HEK293T (cell line): ENCODE measurements at regions of chr4 and their contacts with region 1.

Region 1: DNA sequence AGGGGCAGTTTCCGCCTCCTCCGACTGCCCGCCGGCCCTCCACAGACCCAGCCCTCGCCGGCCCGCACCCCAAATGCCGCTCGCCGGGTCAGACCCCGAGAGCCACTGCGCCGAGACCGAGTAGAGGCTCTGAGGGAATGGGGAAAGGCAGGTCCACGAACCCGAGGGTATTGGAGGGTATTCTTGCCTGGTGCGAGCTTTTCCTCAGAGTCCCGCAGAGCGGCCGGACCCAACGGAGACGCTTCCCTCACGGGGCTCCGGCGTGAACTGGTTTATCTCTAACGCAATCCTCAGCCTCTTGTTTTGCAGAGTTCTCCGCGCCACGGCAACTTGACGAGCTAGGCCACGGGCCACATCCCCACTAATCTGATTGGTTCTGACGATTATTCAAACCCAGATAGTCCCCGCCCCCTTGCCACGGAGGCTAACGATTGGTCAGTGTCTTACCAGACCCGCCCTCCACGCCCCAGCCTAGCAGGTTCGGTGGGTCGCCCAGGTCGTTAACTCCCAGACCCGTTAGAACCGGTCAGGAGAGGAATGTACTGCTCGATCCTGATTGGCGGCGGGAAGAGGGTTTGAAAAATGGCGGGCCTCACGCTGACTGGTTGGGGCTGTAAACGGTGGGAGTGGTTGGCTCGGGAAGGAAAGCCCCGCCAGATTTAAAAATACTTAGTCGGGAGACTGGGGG is at the start of gene HMGB2:
- DNase-seq: peak; percentile 94

Region 2: DNA sequence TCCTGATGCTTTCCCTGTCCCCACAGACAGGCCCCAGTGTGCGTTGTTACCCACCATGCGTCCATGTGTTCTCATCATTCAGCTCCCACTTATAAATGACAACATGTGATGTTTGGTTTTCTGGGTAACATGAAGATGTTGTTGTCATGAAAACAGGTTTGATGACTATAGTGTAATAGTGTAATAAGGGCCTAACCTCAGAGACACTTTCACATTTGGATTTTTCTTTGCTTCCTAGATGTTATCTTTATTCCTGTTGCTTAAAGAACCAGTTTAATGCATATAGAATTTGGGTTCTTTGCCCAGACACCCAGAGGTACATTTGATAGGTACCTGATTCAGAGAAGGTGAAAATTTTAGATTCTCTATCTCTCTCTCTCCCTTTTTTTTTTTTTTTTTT is 137.5 kb before region 1 on chr4:
- CTCF ChIA-PET with region 1: no interaction called
- POLR2A ChIA-PET with region 1: no interaction called
- DNase-seq: no peak

Region 3: DNA sequence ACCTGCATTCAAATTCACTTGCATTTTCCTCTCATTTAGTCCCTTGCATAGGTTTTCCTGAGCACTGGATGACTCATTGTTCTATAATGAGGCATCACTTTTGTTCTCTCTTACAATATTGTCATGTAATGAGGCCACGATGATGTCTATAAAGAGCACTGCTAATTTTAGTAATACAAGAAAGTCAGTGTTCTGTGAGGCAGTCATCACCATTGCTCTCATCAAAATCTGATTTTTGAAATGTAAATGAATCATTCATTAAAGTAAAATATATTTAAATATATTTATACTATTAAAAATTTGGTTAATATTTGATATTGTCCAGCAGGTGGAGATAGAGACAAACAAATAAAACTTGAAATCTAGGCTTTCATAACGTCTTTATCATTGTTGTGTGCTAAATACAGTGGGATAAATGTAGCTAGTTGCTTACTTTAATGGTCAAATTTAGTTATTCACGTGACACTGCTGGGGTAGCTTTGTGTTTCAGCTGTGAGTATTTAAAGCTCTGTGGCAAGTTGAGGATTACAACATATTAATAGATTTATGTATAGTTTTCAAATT is 15.5 kb before region 1 on chr4:
- CTCF ChIA-PET with region 1: no interaction called
- POLR2A ChIA-PET with region 1: interaction called, 38 read pairs
- DNase-seq: no peak

Region 4: GRCh38 chr4:173360587-173361221 is 26.5 kb after region 1 on chr4:
- CTCF ChIA-PET with region 1: interaction called, 4 read pairs
- POLR2A ChIA-PET with region 1: interaction called, 317 read pairs
- DNase-seq: peak; percentile 14

Region 5: DNA sequence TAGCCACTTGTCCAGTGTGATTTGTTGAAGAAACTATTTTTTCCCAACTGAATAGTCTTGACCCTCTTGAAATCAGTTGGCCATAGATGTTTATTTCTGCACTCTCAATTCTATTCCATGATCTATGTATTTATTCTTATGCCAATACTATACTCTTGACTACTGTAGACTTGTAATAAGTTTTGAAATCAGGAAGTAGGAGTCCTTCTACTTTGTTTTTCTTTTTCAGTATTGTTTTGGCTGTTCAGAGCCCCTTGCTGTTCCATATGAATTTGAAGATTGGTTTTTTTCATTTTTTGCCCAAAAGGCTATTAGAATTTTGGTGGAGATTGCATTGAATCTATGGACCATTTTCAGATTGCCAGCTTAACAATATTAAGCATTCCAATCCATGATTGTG is 46.8 kb after region 1 on chr4:
- CTCF ChIA-PET with region 1: no interaction called
- POLR2A ChIA-PET with region 1: interaction called, 317 read pairs
- DNase-seq: no peak

Region 6: DNA sequence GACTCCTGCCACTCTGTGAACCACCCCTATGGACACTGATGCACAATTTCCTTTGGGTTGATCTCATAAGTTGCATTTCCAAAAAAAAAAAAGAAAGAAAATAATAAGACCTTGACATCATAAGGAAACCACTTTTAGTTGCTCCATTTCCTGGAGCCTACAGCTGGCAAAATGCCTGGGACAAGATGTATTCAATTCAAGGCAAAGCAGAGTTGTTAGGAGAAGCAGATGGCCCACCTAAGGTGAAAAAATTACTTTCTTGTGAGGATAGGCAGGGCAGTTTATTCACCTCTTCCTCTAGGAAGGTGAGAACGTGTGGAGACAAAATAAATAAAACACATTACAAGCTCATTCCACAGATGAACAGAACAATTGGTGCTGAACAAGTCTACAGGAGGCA is 78.8 kb after region 1 on chr4:
- CTCF ChIA-PET with region 1: interaction called, 3 read pairs
- POLR2A ChIA-PET with region 1: interaction called, 25 read pairs
- DNase-seq: no peak